Aorta (tissue), 5 donors: ENCODE measurements at regions of chr2 and their contacts with region 1.

Region 1: DNA sequence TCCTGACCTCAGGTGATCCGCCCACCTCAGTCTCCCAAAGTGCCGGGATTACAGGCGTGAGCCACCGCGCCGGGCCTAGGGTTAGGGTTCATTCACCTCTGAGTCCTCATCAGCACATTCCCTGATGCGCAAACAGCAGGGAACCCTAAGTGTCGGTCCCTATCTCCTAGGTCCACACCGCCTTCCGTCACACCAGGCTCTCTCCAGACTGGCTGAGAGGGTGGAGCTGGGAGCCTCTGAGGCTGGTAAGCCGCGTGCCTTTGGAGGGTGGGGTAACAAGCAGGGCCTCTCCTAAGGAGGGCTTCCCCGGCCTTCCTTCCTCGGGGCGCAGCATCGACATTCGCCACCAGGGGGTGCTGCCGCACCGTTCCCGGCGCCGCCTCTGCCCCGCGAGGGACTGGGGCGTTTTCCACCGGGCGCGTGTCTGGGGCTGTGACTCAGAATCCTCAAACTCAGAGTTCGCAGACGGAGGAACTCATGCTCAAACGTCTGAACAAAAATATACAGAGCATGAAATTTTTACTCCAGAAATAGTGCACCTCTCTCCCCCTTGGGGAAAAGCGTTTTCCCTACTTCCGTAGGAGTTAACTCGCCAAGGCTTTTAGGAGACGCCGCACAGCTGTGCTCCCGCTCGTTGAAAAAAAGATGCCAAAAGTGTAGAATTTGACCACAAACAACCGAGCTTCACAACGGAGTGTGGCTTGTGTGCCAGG is 63.9 kb upstream of the ASAP2 start:
- DNase-seq: peak; percentile 94 to 97
- ATAC-seq: peak; percentile 94
- H3K4me3 ChIP-seq: no peak overlapping the region
- H3K27ac ChIP-seq: peak overlapping the region; percentile 45 to 89
- H3K4me1 ChIP-seq: peaks cover 0 to 4% of the 10 kb centered on the region in 2 donors
- H3K27me3 ChIP-seq: no peaks in the 10 kb centered on the region

Region 2: DNA sequence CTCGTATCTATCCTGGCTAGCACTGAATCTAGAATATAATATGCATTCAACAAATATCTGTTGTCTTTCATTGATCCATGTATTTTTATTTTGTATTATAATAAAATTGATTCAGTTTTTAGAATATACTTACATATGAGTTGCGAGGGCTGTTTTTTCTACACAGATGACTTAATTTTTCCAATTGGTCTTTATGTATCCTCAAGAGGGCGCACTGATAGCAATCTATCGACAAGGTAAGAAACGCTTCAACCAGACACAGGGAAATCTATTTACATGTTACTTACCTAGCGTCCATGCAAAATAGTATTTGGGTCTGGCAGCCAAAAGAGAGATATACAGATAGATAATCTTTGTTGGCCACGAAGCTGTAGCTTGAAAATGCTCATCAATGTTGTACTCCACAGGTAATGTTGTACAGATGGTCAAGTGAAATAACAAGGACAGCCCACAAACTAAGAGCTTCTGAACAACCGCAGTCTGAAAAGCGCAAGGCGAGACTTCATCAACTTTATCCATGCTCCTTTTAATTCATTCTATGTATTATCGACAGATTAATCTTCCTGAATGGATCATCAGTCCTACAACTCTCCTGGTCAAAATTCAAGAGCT is 269.8 kb before region 1 on chr2:
- intact Hi-C with region 1: loop called (anchors 1 to 5 kb)
- DNase-seq: no peak
- ATAC-seq: no peak
- H3K4me3 ChIP-seq: no peak overlapping the region
- H3K27ac ChIP-seq: no peak overlapping the region
- H3K4me1 ChIP-seq: no peaks in the 10 kb centered on the region
- H3K27me3 ChIP-seq: no peaks in the 10 kb centered on the region

Region 3: GRCh38 chr2:8922431-8922830 is 220.3 kb before region 1 on chr2:
- intact Hi-C with region 1: no loop called
- DNase-seq: no peak
- ATAC-seq: no peak
- H3K4me3 ChIP-seq: no peak overlapping the region
- H3K27ac ChIP-seq: no peak overlapping the region
- H3K4me1 ChIP-seq: no peaks in the 10 kb centered on the region
- H3K27me3 ChIP-seq: no peaks in the 10 kb centered on the region

Region 4: GRCh38 chr2:9191041-9191481 is 48.4 kb after region 1 on chr2:
- intact Hi-C with region 1: loop called (anchors 5 kb)
- DNase-seq: peak; percentile 98
- ATAC-seq: peak; percentile 92
- H3K4me3 ChIP-seq: no peak overlapping the region
- H3K27ac ChIP-seq: peak overlapping the region; percentile 83 to 98
- H3K4me1 ChIP-seq: peaks cover 5 to 8% of the 10 kb centered on the region in 2 donors
- H3K27me3 ChIP-seq: no peaks in the 10 kb centered on the region

Region 5: DNA sequence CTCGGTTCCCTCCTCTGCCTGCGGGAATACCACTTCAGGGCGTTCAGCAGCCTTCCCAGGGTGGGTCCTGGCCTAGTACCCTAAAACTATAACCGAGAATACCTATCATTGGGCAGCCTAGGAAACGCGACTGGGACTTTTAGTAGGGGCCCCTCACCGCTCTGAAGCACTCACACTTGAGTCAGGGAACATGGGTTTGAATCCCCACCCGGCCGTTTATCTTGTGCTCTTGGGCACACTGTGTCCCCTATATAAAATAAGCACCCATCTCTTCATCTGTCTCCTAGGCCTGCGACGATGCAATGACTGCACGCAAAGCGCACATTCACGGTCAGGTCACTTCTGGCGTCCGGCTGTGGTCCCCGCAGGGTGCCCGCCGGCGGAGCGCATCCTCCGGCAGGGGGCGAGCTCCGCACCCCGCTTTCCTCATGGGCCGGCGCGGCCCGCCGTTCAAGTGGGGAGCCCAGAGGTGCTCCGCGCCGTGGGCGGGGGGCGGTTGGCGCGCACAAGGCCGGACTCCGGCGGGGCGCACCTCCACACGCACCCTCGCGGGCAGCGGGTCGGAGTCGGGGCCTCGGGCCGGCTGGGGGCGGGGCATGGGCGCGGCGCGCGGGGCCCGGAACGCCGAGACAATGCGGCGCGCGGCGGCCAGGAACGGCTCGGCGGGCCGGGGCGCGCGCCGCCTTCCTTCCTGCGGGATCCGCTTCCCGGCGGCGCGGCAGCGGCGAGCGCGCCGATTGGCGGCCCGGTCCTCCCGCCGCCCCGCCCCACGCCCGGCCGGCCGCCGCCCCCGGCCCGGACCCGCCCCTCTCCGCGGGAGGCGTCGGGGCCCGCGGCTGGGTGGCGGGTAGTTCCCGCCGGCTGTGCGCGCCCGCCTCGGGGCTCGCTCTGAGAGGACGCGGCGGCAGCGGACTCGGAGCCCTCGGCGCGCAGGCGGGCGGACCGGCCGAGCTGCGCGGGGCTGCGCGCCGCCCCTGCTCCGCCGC is 63.5 kb after region 1 on chr2 and contains the start of gene ASAP2:
- intact Hi-C with region 1: loop called (anchors 2 to 5 kb)
- DNase-seq: peak; percentile 77 to 91
- ATAC-seq: peak; percentile 90
- H3K4me3 ChIP-seq: peak within 1 kb of the TSS; percentile 87 to 95
- H3K27ac ChIP-seq: peak within 1 kb of the TSS; percentile 90 to 92
- H3K4me1 ChIP-seq: peaks cover 0 to 4% of the 10 kb centered on the region in 2 donors
- H3K27me3 ChIP-seq: no peaks in the 10 kb centered on the region
- total RNA-seq, gene ASAP2: 55.2 to 72.4 TPM

Region 6: DNA sequence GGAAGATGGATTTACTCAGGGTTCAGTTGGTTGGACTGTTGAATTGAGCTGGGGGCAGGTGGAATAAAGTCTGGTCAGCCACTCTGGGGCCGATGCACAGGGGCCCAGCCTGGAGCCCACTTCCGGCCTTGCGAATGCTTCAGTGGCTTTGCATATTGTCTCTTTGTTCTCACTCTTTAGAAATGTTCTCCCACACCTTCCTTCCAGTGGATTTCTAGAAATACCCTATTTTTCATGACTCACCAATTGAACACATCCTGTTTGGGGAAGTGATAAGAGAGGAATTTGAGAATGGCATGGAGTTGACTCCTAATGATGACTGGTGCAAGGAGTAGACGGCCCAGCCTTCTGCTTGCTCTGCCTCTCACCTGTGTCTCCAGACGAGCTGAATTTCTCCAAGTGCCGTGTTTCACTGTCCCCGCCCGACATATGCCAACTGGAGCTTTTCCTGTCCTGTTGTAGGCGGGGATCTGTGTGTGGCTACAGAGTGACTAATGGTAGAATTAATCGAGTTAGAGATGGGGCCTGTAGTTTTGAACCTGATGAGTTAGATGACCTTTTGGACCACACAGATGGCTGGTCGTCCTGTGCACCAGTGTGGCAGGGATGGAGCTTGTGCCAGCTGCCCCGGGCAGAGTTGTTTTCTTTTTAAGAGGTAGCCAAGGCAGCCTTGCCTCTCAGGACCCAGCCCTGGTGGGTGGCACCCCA is 92.1 kb after region 1 on chr2:
- intact Hi-C with region 1: loop called in 1 of 2 experiments (anchors 10 kb)
- DNase-seq: peak in 1 of 2 donors; percentile 57
- ATAC-seq: peak; percentile 68
- H3K4me3 ChIP-seq: no peak overlapping the region
- H3K27ac ChIP-seq: peak overlapping the region; percentile 89 to 94
- H3K4me1 ChIP-seq: peaks cover 4 to 24% of the 10 kb centered on the region in 2 donors
- H3K27me3 ChIP-seq: no peaks in the 10 kb centered on the region

Region 7: DNA sequence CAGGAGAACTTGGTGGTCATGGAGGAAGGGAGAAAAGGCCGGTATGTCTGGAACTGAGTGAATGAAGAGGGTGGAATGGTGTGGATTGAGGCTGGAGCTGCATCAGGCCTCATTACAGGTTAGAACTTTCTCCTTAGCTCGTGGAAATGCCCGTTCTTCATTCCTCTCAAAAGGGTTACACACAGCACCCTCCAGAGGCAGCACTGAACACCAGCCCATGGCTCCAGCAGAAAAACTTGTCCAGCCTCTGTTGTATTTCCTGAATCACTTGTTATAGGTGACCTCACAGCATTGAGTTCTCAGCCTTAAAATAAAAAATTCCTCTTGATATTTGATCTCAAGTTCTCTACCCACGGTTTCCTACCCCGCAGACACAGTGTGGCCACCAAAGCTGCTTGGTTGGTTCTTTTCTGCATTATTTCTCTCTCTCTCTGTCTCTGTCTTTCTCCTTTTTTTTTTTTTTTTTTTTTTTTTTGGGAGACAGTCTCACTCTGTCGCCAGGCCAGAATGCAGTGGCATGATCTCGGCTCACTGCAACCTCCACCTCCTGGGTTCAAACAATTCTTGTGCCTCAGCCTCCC is 191.0 kb after region 1 on chr2:
- intact Hi-C with region 1: loop called (anchors 2 kb)
- DNase-seq: peak in 1 of 2 donors; percentile 77
- ATAC-seq: peak; percentile 79
- H3K4me3 ChIP-seq: no peak overlapping the region
- H3K27ac ChIP-seq: peak overlapping the region; percentile 23 to 58
- H3K4me1 ChIP-seq: no peaks in the 10 kb centered on the region
- H3K27me3 ChIP-seq: no peaks in the 10 kb centered on the region

Region 8: GRCh38 chr2:9423100-9423921 is 280.6 kb after region 1 on chr2 and contains the starts of genes CPSF3 and ITGB1BP1:
- intact Hi-C with region 1: loop called in 1 of 2 experiments (anchors 2 kb)
- DNase-seq: peak; percentile 99
- ATAC-seq: peak; percentile 99
- H3K4me3 ChIP-seq: peak within 1 kb of the TSS; percentile 77 to 88
- H3K27ac ChIP-seq: peak within 1 kb of the TSS in 1 of 2 donors; percentile 67
- H3K4me1 ChIP-seq: peaks cover 1 to 5% of the 10 kb centered on the region in 2 donors
- H3K27me3 ChIP-seq: no peaks in the 10 kb centered on the region
- total RNA-seq, gene CPSF3: 16.2 to 20.4 TPM
- total RNA-seq, gene ITGB1BP1: 112 to 121 TPM